Heart left ventricle (tissue), 16 donors: ENCODE measurements at regions of chr5 and their contacts with region 1.

Region 1: DNA sequence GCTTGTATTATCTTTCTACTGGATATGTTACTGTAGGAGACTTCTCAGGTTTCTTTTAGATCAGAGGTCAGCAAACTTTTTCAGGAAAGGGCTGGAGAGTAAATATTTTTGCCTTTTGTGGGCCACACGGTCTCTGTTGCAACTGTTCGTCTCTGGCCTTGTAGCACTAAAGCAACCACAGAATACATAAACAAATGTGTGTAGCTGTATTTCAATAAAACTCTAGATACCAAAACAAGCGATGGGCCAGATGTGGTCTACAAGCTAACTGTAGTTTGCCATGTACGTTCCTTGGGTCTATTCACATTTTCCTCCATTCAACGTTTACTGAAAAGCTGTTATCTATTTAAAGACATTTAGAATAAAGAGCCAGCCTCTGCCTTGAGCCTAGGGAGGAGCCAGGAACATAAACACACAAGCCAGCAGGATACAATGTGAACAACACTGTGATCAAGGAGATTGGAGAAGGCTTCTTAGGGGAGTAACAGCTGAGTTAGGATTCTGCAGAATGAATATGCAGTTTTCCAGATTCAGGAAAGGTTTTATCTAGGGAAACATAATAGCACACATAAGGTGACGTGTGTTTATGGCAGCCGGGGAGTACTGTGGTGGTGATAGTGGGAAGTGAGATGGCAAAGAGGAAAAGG is 33.0 kb upstream of the HOMER1 start:
- DNase-seq: no peak
- ATAC-seq: no peak
- H3K4me3 ChIP-seq: no peak overlapping the region
- H3K27ac ChIP-seq: no peak overlapping the region
- H3K4me1 ChIP-seq: peaks cover 0 to 5% (median 0%) of the 10 kb centered on the region in 12 donors
- H3K27me3 ChIP-seq: no peaks in the 10 kb centered on the region
- CTCF ChIP-seq: no peak
- POLR2A ChIP-seq: no peak

Region 2: GRCh38 chr5:80318212-80318611 is 771.3 kb after region 1 on chr5:
- intact Hi-C with region 1: loop called in 1 of 10 experiments (anchors 10 kb)
- DNase-seq: peak in 1 of 5 donors; percentile 40
- ATAC-seq: no peak
- H3K4me3 ChIP-seq: no peak overlapping the region
- H3K27ac ChIP-seq: no peak overlapping the region
- H3K4me1 ChIP-seq: no peaks in the 10 kb centered on the region
- H3K27me3 ChIP-seq: no peaks in the 10 kb centered on the region
- CTCF ChIP-seq: no peak
- POLR2A ChIP-seq: no peak